ENCODE measurements at regions of chr7 and their contacts with region 1.

Region 1: DNA sequence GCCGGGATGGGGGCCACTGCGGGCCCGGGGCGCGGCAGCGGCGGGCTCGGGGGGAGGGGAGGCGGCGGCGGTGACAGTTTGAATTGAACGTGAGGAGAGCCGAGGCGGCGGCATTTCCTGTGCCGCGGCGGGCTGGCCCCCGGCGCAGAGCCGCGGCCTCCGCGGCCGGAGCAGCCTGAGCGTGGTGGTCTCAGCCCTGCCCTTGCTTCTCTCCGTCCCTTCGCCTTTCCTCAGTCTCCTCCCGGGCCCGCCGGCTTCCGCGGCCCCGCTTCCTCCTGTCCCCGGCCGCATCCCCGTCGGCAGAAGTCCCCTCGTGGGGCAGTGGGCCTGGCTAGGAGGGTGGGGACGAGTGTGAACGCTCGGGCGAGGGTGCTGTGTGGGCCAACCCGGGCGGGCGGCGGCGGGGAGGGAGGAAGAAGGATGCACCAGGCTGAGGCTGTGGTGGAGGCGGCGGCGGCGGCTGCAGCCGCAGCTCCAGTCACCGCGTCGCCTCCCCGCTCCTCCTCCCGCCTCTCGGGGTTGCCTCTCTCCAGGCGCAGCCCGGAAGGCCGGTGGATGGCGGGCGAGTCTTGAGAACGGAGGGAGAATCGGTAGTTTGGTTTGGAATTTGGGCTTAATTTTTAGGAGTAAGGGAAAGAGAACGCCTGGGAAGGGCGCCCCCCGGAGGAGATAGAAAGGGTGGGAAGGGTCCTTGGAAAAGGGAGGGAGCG is 690 bp downstream of the SEPTIN7 start:
- DNase-seq: peak; percentile 75
- H3K4me3 Mint-ChIP-seq: peak overlapping the region; percentile 96
- H3K27ac Mint-ChIP-seq: peak overlapping the region; percentile 97
- H3K4me1 Mint-ChIP-seq: peaks cover 46% of the 10 kb centered on the region
- H3K27me3 Mint-ChIP-seq: no peaks in the 10 kb centered on the region

Region 2: DNA sequence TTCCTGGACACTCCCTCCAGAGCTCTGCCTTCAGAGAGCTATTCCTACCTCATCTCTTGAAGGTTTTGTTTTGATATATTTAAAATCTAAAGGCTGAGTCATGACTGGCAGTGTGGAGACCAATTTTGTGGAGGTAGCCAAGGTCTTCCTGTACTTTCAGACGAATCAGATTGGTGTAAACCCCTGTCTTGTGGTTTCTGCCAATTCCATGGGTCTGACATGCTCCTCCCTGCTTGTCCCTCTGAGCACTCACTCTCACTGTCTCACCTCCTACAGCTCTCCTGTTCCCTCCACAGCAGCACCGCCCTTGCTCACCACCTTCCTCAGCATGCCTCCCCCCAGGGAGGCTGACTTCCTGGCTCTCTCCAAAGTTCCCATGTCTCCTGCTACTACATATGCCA is 963.7 kb before region 1 on chr7:
- CTCF ChIA-PET with region 1: no interaction called
- intact Hi-C with region 1: no loop called
- DNase-seq: no peak
- H3K4me3 Mint-ChIP-seq: no peak overlapping the region
- H3K27ac Mint-ChIP-seq: no peak overlapping the region
- H3K4me1 Mint-ChIP-seq: peaks cover 3% of the 10 kb centered on the region
- H3K27me3 Mint-ChIP-seq: peaks cover 9% of the 10 kb centered on the region

Region 3: GRCh38 chr7:35694781-35695472 is 106.6 kb before region 1 on chr7 and contains the start of gene HERPUD2:
- CTCF ChIA-PET with region 1: interaction called, 3 read pairs
- intact Hi-C with region 1: loop called (anchors 1 kb)
- DNase-seq: peak; percentile 92
- H3K4me3 Mint-ChIP-seq: peak within 1 kb of the TSS; percentile 94
- H3K27ac Mint-ChIP-seq: peak within 1 kb of the TSS; percentile 96
- H3K4me1 Mint-ChIP-seq: peaks cover 35% of the 10 kb centered on the region
- H3K27me3 Mint-ChIP-seq: no peaks in the 10 kb centered on the region
- total RNA-seq, gene HERPUD2: 20.3 to 22.4 TPM

Region 4: DNA sequence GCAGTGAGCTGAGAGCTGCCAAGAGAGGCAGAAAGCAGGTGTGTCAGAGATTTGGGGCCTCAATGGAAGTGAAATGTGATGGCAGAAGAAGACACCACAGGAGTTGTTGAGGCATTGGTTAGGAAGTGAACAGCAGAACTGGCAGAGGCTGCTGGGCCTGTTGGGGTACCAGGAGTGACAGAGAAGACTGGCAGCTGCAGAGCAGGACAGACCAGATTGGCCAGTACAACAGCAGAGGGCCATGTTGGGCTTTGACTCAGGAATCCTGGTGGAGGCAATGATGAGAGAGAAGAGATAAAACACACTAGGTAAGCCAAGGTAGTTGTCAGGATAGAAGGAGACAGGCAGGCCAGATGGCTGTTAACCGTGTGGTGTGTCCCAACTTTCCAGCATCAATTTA is 86.7 kb before region 1 on chr7:
- CTCF ChIA-PET with region 1: interaction called, 10 read pairs
- intact Hi-C with region 1: no loop called
- DNase-seq: peak; percentile 23
- H3K4me3 Mint-ChIP-seq: no peak overlapping the region
- H3K27ac Mint-ChIP-seq: no peak overlapping the region
- H3K4me1 Mint-ChIP-seq: peaks cover 2% of the 10 kb centered on the region
- H3K27me3 Mint-ChIP-seq: no peaks in the 10 kb centered on the region

Region 5: DNA sequence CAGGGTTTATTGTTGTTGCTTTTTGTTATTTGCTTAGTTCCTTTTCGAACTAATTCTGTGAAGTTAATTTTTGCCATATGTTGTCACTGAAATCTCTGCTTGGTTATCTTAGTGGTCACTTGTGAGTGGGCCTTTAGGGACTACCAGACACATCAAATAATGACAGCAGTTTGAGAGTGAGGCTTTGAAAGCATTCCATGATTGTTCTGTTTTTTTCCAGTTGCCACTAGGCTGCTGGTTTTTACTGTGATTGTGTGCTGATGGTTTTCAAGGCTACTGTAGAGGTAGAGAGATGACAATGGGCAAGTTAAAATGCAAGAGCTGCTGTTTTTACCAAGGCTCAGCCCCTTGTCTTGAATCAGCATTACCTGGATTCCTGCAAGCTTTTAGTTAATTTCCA is 19.3 kb after region 1 on chr7:
- CTCF ChIA-PET with region 1: interaction called, 15 read pairs
- intact Hi-C with region 1: loop called (anchors 1 kb)
- DNase-seq: no peak
- H3K4me3 Mint-ChIP-seq: no peak overlapping the region
- H3K27ac Mint-ChIP-seq: no peak overlapping the region
- H3K4me1 Mint-ChIP-seq: peaks cover 57% of the 10 kb centered on the region
- H3K27me3 Mint-ChIP-seq: no peaks in the 10 kb centered on the region

Region 6: GRCh38 chr7:35894721-35895120 is 93.2 kb after region 1 on chr7:
- CTCF ChIA-PET with region 1: no interaction called
- intact Hi-C with region 1: loop called (anchors 2 kb)
- DNase-seq: no peak
- H3K4me3 Mint-ChIP-seq: no peak overlapping the region
- H3K27ac Mint-ChIP-seq: no peak overlapping the region
- H3K4me1 Mint-ChIP-seq: peaks cover 22% of the 10 kb centered on the region
- H3K27me3 Mint-ChIP-seq: no peaks in the 10 kb centered on the region

Region 7: DNA sequence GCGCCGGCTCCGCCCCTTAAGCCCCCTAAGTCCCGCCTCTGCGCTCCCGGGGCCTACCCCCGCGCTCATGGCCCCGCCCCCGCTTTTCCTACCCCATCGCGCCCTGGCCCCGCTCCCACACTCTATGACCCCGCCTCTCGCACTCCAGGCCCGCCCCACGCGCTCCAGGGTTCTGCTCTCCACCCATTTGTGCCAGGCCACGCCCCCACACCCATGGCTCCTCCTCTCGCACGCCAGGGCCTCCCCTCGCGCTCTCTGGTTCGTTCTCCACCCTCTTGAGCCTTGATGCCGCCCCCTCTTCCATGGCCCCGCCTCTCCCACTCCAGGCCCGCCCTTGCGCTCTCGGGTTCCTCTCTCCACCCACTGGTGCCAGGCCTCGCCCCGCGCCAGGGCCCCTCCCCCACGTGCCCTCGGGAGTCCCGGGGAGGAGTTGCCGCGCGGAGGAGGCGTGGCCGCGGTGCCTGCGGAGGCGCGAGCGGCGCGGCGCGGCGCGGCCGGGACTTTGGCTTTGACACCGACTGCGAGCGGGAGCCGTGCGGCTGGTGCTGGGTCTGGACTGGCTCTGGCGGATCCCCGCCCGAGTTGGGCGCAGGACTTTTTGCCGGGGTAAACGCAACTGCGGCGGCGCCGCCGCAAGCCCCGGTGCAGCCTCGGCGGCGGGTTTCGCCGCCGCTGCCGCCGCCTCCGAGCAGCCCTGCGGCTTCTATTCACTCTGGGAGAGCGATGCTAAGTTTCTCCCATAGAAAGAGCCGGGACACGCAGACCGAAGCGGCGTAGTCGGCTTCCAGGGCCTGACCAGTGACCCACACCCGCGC is 351.4 kb after region 1 on chr7 and contains the start of gene EEPD1:
- CTCF ChIA-PET with region 1: no interaction called
- intact Hi-C with region 1: loop called (anchors 1 kb)
- DNase-seq: peak; percentile 100
- H3K4me3 Mint-ChIP-seq: peak within 1 kb of the TSS; percentile 72
- H3K27ac Mint-ChIP-seq: no peak within 1 kb of the TSS
- H3K4me1 Mint-ChIP-seq: peaks cover 18% of the 10 kb centered on the region
- H3K27me3 Mint-ChIP-seq: no peaks in the 10 kb centered on the region
- total RNA-seq, gene EEPD1: 0.49 to 0.50 TPM

Region 8: GRCh38 chr7:36389371-36390198 is 588.0 kb after region 1 on chr7 and contains the start of gene ANLN:
- CTCF ChIA-PET with region 1: no interaction called
- intact Hi-C with region 1: loop called (anchors 5 kb)
- DNase-seq: peak; percentile 85
- H3K4me3 Mint-ChIP-seq: peak within 1 kb of the TSS; percentile 87
- H3K27ac Mint-ChIP-seq: peak within 1 kb of the TSS; percentile 86
- H3K4me1 Mint-ChIP-seq: peaks cover 21% of the 10 kb centered on the region
- H3K27me3 Mint-ChIP-seq: peaks cover 10% of the 10 kb centered on the region
- total RNA-seq, gene ANLN: 62.4 to 64.8 TPM